ENCODE measurements at regions of chr12 and their contacts with region 1.

Region 1: DNA sequence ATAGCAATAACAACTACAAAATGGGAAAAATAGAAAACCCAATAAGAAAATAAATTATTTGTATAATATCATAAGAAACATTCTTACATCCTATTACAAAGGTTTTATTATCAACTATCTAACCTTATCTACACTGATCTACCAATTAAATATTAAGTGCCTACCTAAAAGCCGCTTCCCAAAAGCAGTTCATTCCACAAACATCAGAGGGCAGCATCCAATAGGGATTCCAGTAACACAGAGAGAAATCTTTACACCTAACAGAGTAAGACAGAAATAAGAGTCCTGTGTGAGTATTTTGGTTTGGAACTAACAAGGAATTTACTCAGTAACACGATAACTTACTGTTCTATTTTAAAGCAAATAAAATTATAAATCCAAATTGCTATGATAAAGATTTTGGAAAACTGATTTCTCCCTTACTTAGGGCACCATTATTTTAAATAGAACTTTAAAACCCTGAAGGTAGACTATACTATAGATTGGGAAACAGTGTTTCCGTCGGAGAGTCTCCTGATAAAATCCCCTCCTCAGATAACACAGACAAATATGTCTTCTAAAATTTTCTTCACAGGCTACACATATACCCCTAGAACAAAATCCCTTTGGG is 15.0 kb downstream of the GXYLT1 start:
- DNase-seq: peak; percentile 13
- H3K4me3 ChIP-seq: no peak overlapping the region
- H3K27ac ChIP-seq: no peak overlapping the region
- H3K4me1 ChIP-seq: peaks cover 0 to 17% (median 0%) of the 10 kb centered on the region in 4 donors
- H3K27me3 ChIP-seq: no peaks in the 10 kb centered on the region
- CTCF ChIP-seq: peak; percentile 69 to 78 (median 76)
- EP300 ChIP-seq: no peak
- POLR2A ChIP-seq: no peak

Region 2: DNA sequence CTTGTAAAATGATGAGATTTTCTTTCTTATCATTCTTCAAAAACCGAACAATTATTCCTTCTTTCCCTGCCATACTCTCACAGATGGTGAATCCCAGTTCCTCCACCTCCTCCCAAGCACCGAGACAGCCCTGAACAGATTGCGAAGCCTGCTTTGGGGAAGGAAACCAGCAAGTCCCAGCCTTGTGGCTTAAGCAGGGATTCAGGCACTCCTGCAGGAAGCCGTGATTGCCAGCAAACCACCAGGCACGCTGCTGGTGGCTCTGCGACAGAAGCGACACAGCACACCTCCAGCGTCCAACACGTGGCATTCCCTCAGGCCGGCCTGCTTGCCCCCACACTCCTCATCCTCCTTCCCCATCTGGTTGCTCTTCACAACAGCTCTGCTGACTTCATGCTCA is 222.7 kb before region 1 on chr12:
- in situ Hi-C with region 1: no loop called
- intact Hi-C with region 1: no loop called
- DNase-seq: no peak
- H3K4me3 ChIP-seq: no peak overlapping the region
- H3K27ac ChIP-seq: no peak overlapping the region
- H3K4me1 ChIP-seq: no peaks in the 10 kb centered on the region
- H3K27me3 ChIP-seq: no peaks in the 10 kb centered on the region
- CTCF ChIP-seq: no peak
- EP300 ChIP-seq: no peak
- POLR2A ChIP-seq: no peak

Region 3: GRCh38 chr12:42332301-42333285 is 202.9 kb after region 1 on chr12:
- in situ Hi-C with region 1: loop called in 2 of 4 experiments (anchors 10 kb)
- intact Hi-C with region 1: loop called (anchors 5 kb)
- DNase-seq: no peak
- H3K4me3 ChIP-seq: no peak overlapping the region
- H3K27ac ChIP-seq: no peak overlapping the region
- H3K4me1 ChIP-seq: peaks cover 4 to 16% (median 6%) of the 10 kb centered on the region in 4 donors
- H3K27me3 ChIP-seq: no peaks in the 10 kb centered on the region
- CTCF ChIP-seq: peak; percentile 51 to 64 (median 60)
- EP300 ChIP-seq: no peak
- POLR2A ChIP-seq: no peak